SK-N-SH (cell line): ENCODE measurements at regions of chr6 and their contacts with region 1.

Region 1: GRCh38 chr6:25556516-25556915 is 95.5 kb upstream of the SCGN start:
- DNase-seq: peak; percentile 36
- H3K4me3 ChIP-seq: no peak overlapping the region; a peak in 1 of 4 replicates
- H3K27ac ChIP-seq: no peak overlapping the region
- H3K4me1 ChIP-seq: peaks cover 0 to 6% of the 10 kb centered on the region in 2 experiments; a peak in 2 of 4 replicates
- H3K27me3 ChIP-seq: no peaks in the 10 kb centered on the region
- CTCF ChIP-seq: peak; percentile 95
- EP300 ChIP-seq: no peak
- RAD21 ChIP-seq: peak; percentile 77

Region 2: DNA sequence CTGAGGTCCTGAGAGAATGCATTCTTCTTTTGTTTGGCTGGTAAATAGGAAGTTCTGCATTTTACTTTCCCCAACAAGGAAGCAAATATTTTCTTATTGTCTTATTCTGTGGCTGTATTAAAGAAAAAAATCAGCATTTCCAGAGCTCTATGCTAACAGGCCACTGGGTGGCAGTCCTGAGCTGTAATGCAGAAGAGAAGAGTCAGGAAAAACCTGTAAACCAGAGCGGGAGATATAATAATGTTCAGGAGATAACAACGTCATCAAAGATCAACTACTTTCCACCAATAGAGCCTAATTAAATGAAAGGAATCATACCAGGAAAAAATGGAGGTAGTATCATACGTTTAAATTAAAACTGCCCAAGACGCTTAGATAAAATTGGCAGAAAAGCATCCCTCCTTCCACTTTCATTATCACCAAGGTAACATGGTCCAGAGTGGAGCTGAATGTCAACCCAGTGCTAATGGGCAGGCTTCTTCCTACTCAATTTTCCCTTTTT is 333.0 kb before region 1 on chr6:
- CTCF ChIA-PET with region 1: interaction called, 22 read pairs
- POLR2A ChIA-PET with region 1: no interaction called
- DNase-seq: peak; percentile 64
- H3K4me3 ChIP-seq: peak overlapping the region; percentile 21 to 39
- H3K27ac ChIP-seq: peak overlapping the region in 1 of 2 experiments; percentile 39; a peak in 1 of 4 replicates
- H3K4me1 ChIP-seq: peaks cover 3 to 29% of the 10 kb centered on the region in 2 experiments; a peak in 3 of 4 replicates
- H3K27me3 ChIP-seq: no peaks in the 10 kb centered on the region
- CTCF ChIP-seq: peak; percentile 99
- EP300 ChIP-seq: no peak
- RAD21 ChIP-seq: peak; percentile 95

Region 3: GRCh38 chr6:25278914-25279747 is 277.4 kb before region 1 on chr6 and contains the start of gene CARMIL1:
- CTCF ChIA-PET with region 1: interaction called, 66 read pairs
- POLR2A ChIA-PET with region 1: no interaction called
- DNase-seq: peak; percentile 94
- H3K4me3 ChIP-seq: peak within 1 kb of the TSS; percentile 82 to 95
- H3K27ac ChIP-seq: peak within 1 kb of the TSS; percentile 41 to 60; a peak in 2 of 4 replicates
- H3K4me1 ChIP-seq: peaks cover 0 to 14% of the 10 kb centered on the region in 2 experiments; a peak in 2 of 4 replicates
- H3K27me3 ChIP-seq: no peaks in the 10 kb centered on the region
- CTCF ChIP-seq: peak; percentile 73
- EP300 ChIP-seq: no peak; a peak in 1 of 4 replicates
- RAD21 ChIP-seq: peak; percentile 83
- polyA plus RNA-seq, gene CARMIL1: 1.7 TPM in 2 replicates

Region 4: GRCh38 chr6:25519856-25520255 is 36.7 kb before region 1 on chr6:
- CTCF ChIA-PET with region 1: interaction called, 10 read pairs
- POLR2A ChIA-PET with region 1: no interaction called
- DNase-seq: no peak
- H3K4me3 ChIP-seq: no peak overlapping the region
- H3K27ac ChIP-seq: no peak overlapping the region
- H3K4me1 ChIP-seq: no peaks in the 10 kb centered on the region; a peak in 1 of 4 replicates
- H3K27me3 ChIP-seq: no peaks in the 10 kb centered on the region
- CTCF ChIP-seq: no peak
- EP300 ChIP-seq: no peak
- RAD21 ChIP-seq: no peak

Region 5: GRCh38 chr6:25542984-25543910 is 13.3 kb before region 1 on chr6:
- CTCF ChIA-PET with region 1: interaction called, 16 read pairs
- POLR2A ChIA-PET with region 1: no interaction called
- DNase-seq: no peak
- H3K4me3 ChIP-seq: no peak overlapping the region
- H3K27ac ChIP-seq: no peak overlapping the region
- H3K4me1 ChIP-seq: no peaks in the 10 kb centered on the region; a peak in 1 of 4 replicates
- H3K27me3 ChIP-seq: no peaks in the 10 kb centered on the region
- CTCF ChIP-seq: no peak
- EP300 ChIP-seq: no peak
- RAD21 ChIP-seq: no peak

Region 6: GRCh38 chr6:25601800-25602673 is 45.5 kb after region 1 on chr6:
- CTCF ChIA-PET with region 1: interaction called, 14 read pairs
- POLR2A ChIA-PET with region 1: no interaction called
- DNase-seq: peak; percentile 49
- H3K4me3 ChIP-seq: no peak overlapping the region; a peak in 1 of 4 replicates
- H3K27ac ChIP-seq: no peak overlapping the region
- H3K4me1 ChIP-seq: no peaks in the 10 kb centered on the region; a peak in 1 of 4 replicates
- H3K27me3 ChIP-seq: no peaks in the 10 kb centered on the region
- CTCF ChIP-seq: peak; percentile 80
- EP300 ChIP-seq: no peak
- RAD21 ChIP-seq: peak; percentile 85